Sciatic nerve (tissue), 2 donors: ENCODE measurements at regions of chr16 and their contacts with region 1.

Region 1: DNA sequence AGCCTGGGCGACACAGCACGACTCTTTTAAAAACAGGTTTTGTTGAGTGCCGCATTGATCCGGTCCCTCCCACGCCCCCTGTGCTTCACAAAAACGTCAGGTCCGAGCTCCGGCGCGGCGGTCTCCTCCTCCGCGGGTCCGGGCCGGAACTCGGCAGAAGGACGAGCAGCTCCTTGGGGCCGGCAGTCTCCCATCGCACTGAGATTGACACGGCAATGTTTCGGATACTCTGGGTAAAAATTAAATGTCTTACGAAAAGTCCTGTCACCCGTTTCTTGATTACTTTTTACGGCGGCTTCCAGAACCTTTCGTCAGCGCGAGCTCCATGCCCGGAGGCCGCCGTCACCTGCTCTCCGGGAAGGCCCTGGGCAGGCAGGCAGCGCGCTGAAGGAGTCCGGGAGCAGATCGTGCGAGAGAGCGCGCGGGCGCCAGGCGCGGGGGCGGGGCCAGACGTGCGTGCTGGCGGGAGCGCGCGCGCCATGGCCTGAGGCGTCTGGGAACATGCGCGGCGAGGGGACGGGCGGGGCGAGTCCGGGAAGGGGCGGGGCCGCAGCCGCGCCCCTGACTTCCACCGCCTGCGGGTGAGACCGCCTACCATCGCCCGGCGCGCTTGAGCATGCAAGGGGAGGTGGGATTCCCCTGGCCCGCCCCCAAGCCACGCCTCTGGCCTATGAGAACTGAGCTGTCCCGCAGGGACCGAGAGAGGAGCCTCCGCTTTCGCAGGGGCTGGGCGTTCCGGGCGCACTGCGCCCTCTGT is 11.7 kb upstream of the SRL start:
- DNase-seq: peak; percentile 100
- ATAC-seq: peak; percentile 97

Region 2: DNA sequence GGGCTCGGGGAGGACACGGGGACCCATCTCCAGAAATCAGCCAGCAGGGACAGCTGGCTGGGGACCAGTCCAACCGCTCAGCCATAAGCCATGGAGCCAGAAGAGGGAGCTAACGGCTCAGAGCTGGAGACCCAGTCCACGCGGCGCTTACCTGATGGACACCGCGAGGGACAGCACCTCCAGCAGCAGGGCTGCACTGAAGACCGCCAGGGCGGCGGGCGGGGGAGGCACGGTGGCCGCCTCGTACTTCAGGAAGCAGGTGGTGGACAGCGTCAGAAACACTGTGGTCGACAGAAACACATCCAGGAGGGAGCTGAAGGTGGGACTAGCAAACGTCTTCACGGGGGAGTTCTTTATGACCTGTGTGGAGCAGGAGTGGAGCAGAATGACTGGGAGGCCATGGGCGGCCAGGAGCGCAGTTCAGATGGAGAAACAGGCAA is 270.5 kb before region 1 on chr16:
- intact Hi-C with region 1: loop called (anchors 5 kb)
- DNase-seq: peak; percentile 79
- ATAC-seq: peak; percentile 77

Region 3: GRCh38 chr16:4218202-4218601 is 35.4 kb before region 1 on chr16:
- intact Hi-C with region 1: no loop called
- DNase-seq: no peak
- ATAC-seq: peak; percentile 25